HepG2 (cell line): ENCODE measurements at regions of chr20 and their contacts with region 1.

Region 1: DNA sequence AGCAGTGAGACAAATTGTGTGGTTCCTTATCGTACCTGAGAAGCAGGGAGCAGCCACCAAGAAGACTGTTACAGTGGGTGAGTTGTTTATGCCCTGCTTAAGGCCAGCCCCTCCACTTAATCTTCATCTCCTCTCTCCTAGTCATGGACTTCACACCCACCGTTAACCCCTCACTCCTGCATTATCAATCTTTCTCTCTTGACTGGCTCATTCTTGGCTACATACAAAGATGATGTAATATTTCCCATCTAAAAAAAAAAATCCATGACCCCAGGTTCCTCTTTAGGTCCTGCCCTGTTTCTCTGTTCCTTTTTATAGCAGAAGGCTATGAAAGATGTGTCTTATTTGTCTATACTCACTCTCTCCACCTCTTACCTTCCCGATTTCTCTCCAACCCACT is 72.4 kb downstream of the SHLD1 start:
- DNase-seq: no peak
- ATAC-seq: no peak
- H3K4me3 ChIP-seq: no peak overlapping the region
- H3K27ac ChIP-seq: peak overlapping the region; percentile 73
- H3K4me1 ChIP-seq: peaks cover 71% of the 10 kb centered on the region
- H3K27me3 ChIP-seq: no peaks in the 10 kb centered on the region
- CTCF ChIP-seq: no peak
- EP300 ChIP-seq: no peak
- POLR2A ChIP-seq: no peak
- RAD21 ChIP-seq: no peak

Region 2: DNA sequence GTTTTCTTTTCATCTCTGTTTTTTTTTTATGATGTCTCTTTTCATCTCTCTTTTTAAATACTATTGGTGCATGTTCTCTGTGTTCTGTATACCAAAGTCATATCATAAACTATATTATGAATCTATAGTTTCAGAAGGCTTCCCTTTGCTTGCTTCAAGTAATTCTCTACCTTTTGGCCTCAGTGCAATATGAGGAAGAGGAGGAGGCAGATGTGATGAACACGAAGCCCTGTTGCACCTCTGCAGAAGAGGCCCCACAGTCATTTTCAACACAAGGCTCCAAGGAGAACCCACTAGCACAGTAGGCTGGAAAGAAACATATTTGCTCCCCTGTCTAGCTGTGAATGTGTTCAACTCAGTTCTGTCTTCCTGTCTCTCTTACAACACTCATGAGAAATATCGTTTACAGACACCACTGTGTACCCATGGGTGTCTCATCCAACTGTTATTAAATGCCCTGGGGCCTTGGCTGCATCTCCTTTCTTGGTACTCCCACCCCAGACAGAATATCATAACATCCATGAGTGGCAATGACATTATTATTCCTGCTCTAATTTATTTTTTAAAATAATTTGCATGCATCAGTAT is 195.0 kb before region 1 on chr20:
- CTCF ChIA-PET with region 1: no interaction called
- POLR2A ChIA-PET with region 1: no interaction called
- in situ Hi-C with region 1: no loop called
- intact Hi-C with region 1: no loop called
- DNase-seq: no peak
- ATAC-seq: no peak; the same call in 2 of the 3 replicates
- H3K4me3 ChIP-seq: no peak overlapping the region
- H3K27ac ChIP-seq: no peak overlapping the region
- H3K4me1 ChIP-seq: no peaks in the 10 kb centered on the region
- H3K27me3 ChIP-seq: no peaks in the 10 kb centered on the region; a peak in 1 of 5 replicates
- CTCF ChIP-seq: no peak
- EP300 ChIP-seq: no peak
- POLR2A ChIP-seq: no peak
- RAD21 ChIP-seq: no peak

Region 3: GRCh38 chr20:5779071-5779900 is 43.3 kb before region 1 on chr20:
- CTCF ChIA-PET with region 1: no interaction called
- POLR2A ChIA-PET with region 1: interaction called, 3 read pairs
- in situ Hi-C with region 1: no loop called
- intact Hi-C with region 1: loop called (anchors 2 kb)
- DNase-seq: peak; percentile 91
- ATAC-seq: peak; percentile 83
- H3K4me3 ChIP-seq: no peak overlapping the region
- H3K27ac ChIP-seq: peak overlapping the region; percentile 36
- H3K4me1 ChIP-seq: peaks cover 52% of the 10 kb centered on the region
- H3K27me3 ChIP-seq: no peaks in the 10 kb centered on the region
- CTCF ChIP-seq: no peak
- EP300 ChIP-seq: peak in 1 of 2 experiments; percentile 95; a peak in 2 of 4 replicates
- POLR2A ChIP-seq: no peak
- RAD21 ChIP-seq: no peak

Region 4: GRCh38 chr20:5806457-5807263 is 15.9 kb before region 1 on chr20:
- CTCF ChIA-PET with region 1: no interaction called
- POLR2A ChIA-PET with region 1: interaction called, 29 read pairs
- in situ Hi-C with region 1: no loop called
- intact Hi-C with region 1: loop called (anchors 1 kb)
- DNase-seq: peak; percentile 38
- ATAC-seq: peak; percentile 41; the same call in 2 of the 3 replicates
- H3K4me3 ChIP-seq: no peak overlapping the region
- H3K27ac ChIP-seq: no peak overlapping the region
- H3K4me1 ChIP-seq: peaks cover 62% of the 10 kb centered on the region
- H3K27me3 ChIP-seq: no peaks in the 10 kb centered on the region
- CTCF ChIP-seq: peak; percentile 48
- EP300 ChIP-seq: no peak
- POLR2A ChIP-seq: no peak
- RAD21 ChIP-seq: peak; percentile 66

Region 5: DNA sequence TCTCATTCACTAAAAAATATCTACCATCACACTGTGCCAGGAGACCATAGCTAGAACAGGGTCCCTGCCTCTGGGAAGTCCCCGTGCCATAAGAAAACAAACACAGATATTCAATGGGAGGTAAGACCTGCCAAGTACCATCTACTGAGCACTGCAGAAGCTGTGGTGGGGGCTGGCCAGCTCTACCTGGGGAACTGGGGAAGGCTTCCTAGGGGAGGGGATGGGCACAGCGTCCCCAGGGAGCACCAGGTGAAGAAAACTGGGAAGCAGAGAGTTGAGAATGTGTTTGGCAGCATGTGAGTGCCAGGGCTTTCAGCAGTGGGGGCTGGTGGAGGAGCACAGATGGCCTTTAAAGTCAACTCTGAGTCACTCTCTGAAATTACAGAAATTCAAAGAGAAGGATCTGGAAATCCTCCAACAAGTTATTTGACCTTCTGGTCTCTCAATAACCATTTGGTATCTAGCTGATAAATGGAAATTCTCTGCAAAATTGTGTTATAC is 12.8 kb after region 1 on chr20:
- CTCF ChIA-PET with region 1: no interaction called
- POLR2A ChIA-PET with region 1: interaction called, 14 read pairs
- in situ Hi-C with region 1: no loop called
- intact Hi-C with region 1: no loop called
- DNase-seq: peak; percentile 78
- ATAC-seq: peak; percentile 70
- H3K4me3 ChIP-seq: no peak overlapping the region
- H3K27ac ChIP-seq: peak overlapping the region; percentile 28
- H3K4me1 ChIP-seq: peaks cover 55% of the 10 kb centered on the region
- H3K27me3 ChIP-seq: no peaks in the 10 kb centered on the region
- CTCF ChIP-seq: no peak
- EP300 ChIP-seq: no peak
- POLR2A ChIP-seq: no peak
- RAD21 ChIP-seq: no peak